PC-9 (cell line): ENCODE measurements at regions of chr2 and their contacts with region 1.

Region 1: GRCh38 chr2:41922177-41922576 is 125.6 kb upstream of the PKDCC start:
- DNase-seq: peak; percentile 85 to 97
- H3K4me3 ChIP-seq: no peak overlapping the region
- H3K27ac ChIP-seq: peak overlapping the region; percentile 76
- H3K4me1 ChIP-seq: peaks cover 43% of the 10 kb centered on the region
- H3K27me3 ChIP-seq: no peaks in the 10 kb centered on the region
- CTCF ChIP-seq: no peak

Region 2: GRCh38 chr2:41668529-41668928 is 253.6 kb before region 1 on chr2:
- CTCF ChIA-PET with region 1: no interaction called
- POLR2A ChIA-PET with region 1: no interaction called
- intact Hi-C with region 1: no loop called
- DNase-seq: no peak
- H3K4me3 ChIP-seq: no peak overlapping the region
- H3K27ac ChIP-seq: no peak overlapping the region
- H3K4me1 ChIP-seq: no peaks in the 10 kb centered on the region
- H3K27me3 ChIP-seq: peaks cover 36% of the 10 kb centered on the region
- CTCF ChIP-seq: no peak

Region 3: GRCh38 chr2:41869542-41870264 is 52.5 kb before region 1 on chr2:
- CTCF ChIA-PET with region 1: no interaction called
- POLR2A ChIA-PET with region 1: no interaction called
- intact Hi-C with region 1: loop called (anchors 2 kb)
- DNase-seq: peak in 1 of 2 experiments; percentile 74
- H3K4me3 ChIP-seq: no peak overlapping the region
- H3K27ac ChIP-seq: no peak overlapping the region
- H3K4me1 ChIP-seq: peaks cover 13% of the 10 kb centered on the region
- H3K27me3 ChIP-seq: no peaks in the 10 kb centered on the region
- CTCF ChIP-seq: peak; percentile 98

Region 4: DNA sequence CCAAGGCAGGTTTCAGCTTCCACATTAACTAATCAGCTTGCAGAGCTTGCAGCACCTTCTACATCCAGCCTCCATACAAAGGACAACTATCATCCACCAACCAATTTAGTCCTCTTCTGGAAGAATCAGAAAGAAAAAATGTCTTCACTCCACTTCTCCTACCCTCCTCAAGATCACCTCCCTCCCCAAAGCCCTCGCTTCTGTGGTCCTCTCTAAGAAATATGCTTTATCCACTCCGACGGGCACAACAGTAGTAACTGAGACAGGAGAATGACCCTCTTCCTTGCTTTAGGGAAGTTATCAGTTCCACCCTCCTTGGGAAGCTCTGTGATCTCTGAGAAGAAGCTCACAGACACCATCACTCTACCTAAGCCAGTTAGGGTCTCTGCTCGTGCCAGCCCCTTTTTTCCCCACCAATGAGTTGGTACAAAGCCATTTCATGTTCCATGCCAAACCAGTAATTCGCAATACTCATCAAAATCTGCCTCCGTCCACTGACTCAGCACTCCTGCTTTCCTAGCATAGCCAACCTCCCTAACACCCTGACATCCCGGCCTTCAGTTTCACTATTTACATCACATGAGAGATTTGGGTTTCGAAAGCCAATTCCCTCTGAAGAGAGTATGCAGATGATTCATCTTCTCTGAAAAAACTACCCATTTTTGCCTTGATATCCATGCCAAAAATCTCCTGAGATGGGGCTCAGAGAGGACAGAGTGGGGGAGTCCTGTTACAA is 11.6 kb after region 1 on chr2:
- CTCF ChIA-PET with region 1: no interaction called
- POLR2A ChIA-PET with region 1: no interaction called
- intact Hi-C with region 1: loop called (anchors 1 kb)
- DNase-seq: peak in 1 of 2 experiments; percentile 95
- H3K4me3 ChIP-seq: no peak overlapping the region
- H3K27ac ChIP-seq: peak overlapping the region; percentile 87
- H3K4me1 ChIP-seq: peaks cover 86% of the 10 kb centered on the region
- H3K27me3 ChIP-seq: no peaks in the 10 kb centered on the region
- CTCF ChIP-seq: no peak

Region 5: DNA sequence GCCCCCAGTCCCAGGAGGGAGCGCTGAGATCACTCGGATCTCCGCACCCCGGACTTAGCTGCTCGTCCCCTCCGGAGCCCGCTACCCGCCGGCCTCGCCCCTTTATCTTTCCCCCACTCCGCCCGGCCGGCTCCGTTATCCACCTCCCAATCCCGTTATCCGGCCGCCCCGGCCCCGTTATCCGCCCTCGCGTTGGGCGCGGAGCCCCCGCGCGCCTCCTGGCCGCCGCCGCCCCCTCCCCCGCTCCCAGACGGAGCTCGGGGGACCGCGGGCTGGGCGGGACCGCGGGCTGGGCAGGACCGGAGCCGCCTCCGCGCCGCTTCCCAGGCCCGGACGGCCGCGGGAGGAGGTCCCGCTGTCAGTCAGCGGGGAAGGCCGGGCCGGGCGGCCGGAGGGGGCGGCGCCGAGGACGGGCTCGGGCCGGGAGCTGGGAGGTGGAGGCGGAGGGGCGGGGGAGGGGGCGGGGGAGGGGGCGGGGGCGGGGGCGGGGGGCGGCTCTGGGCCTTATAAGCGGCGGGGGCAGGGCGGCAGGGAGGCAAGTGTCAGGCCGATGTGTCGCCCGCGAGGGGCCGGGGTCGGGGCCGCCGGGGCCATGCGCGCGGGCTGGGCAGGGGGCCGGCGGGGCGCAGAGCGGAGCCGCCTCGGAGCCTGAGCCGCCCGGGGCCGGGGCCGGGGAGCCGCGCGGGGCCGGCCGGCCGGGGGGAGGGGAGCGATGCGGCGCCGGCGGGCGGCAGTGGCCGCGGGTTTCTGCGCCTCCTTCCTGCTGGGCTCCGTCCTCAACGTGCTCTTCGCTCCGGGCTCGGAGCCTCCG is 125.5 kb after region 1 on chr2 and contains the start of gene PKDCC:
- CTCF ChIA-PET with region 1: no interaction called
- POLR2A ChIA-PET with region 1: no interaction called
- intact Hi-C with region 1: loop called (anchors 5 kb)
- DNase-seq: peak in 1 of 2 experiments; percentile 81
- H3K4me3 ChIP-seq: peak within 1 kb of the TSS; percentile 64
- H3K27ac ChIP-seq: no peak within 1 kb of the TSS
- H3K4me1 ChIP-seq: peaks cover 9% of the 10 kb centered on the region; the same call in 1 of the 2 replicates
- H3K27me3 ChIP-seq: peaks cover 16% of the 10 kb centered on the region; the same call in 1 of the 2 replicates
- CTCF ChIP-seq: no peak
- total RNA-seq, gene PKDCC: 3.9 and 5.5 TPM in 2 replicates